ENCODE measurements at regions of chr6 and their contacts with region 1.

Region 1: DNA sequence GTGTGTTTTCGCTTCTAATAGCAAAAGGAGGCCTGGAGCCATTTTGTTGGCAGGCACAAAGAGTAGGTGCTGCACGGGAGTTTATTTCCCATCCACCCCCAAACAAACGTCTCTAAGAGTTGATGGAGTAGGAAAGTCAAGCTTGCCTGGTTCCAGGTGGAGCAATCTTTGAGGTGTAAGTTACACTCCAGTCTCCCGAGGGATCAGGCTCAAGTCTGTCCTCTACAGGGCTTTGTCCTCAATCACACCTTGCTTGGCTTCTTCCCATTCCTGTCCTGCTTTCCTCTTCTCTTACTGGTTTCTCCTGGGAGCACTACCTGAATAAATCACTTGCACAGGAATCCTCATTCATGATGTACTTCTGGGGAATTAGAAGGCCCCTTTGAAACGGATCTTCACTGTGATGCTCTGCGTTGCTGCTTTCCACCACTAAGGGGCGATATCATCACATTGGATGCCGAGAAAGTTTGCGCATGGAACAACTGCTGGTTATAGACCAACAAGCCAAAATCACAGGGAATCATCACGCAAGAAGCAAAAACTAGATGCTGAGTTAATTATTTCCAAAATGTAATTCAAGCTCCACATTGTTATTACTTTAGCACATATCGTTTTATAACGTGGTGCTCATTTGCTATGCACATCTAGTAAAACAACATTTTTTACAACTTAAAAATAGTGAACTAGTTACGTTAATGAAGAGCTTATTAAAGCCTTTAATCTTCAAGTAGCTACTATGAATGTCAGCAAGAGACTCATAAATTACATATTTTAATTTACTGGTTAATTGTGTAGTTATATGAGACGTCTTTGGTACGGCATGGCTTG is 156.8 kb downstream of the DNAH8 start:
- DNase-seq: peak; percentile 34
- H3K4me3 Mint-ChIP-seq: no peak overlapping the region
- H3K27ac Mint-ChIP-seq: no peak overlapping the region
- H3K4me1 Mint-ChIP-seq: peaks cover 19% of the 10 kb centered on the region
- H3K27me3 Mint-ChIP-seq: peaks cover 18% of the 10 kb centered on the region

Region 2: GRCh38 chr6:38933432-38933831 is 61.5 kb after region 1 on chr6:
- intact Hi-C with region 1: loop called (anchors 1 kb)
- DNase-seq: no peak
- H3K4me3 Mint-ChIP-seq: no peak overlapping the region
- H3K27ac Mint-ChIP-seq: no peak overlapping the region
- H3K4me1 Mint-ChIP-seq: no peaks in the 10 kb centered on the region
- H3K27me3 Mint-ChIP-seq: peaks cover 18% of the 10 kb centered on the region

Region 3: DNA sequence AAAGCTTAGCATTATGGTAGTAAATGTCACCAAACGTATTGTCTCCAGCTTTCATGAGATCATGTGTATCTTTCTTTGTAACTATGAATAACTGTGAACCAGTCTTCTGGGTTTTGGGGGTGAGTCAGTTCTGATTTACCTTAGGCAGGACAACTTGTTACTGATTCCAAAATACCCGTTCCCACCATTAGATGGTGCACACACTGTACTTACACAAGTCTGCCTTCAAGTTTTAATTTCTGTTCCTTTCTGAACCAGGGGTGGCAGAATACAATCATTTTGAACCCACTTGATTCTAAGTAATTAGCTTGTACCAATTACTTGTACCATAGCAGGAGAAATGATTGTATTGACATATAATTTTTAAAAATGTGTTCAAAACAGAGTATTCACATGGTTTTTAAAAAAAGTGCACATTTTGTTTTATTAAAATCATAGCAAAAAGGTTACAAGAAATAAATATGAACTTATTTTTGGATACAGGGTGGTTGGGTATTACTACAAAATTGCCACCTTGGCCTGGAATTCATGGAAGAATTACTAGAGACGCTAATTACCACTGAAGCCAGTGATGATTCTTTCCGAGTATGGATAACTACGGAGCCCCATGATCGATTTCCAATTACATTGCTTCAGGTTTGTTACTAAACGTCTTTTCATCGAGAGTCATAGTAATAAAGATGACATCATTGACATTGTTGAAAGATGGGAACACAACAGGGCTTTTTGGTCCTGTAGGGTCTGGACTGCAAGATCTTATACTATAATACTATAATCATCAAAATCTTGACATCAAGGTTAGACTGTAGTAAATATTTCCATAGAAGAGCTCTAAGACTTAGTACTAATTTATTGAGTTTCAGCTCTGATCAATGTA is 101.5 kb after region 1 on chr6:
- intact Hi-C with region 1: loop called (anchors 10 kb)
- DNase-seq: no peak
- H3K4me3 Mint-ChIP-seq: no peak overlapping the region
- H3K27ac Mint-ChIP-seq: no peak overlapping the region
- H3K4me1 Mint-ChIP-seq: peaks cover 5% of the 10 kb centered on the region
- H3K27me3 Mint-ChIP-seq: peaks cover 46% of the 10 kb centered on the region

Region 4: DNA sequence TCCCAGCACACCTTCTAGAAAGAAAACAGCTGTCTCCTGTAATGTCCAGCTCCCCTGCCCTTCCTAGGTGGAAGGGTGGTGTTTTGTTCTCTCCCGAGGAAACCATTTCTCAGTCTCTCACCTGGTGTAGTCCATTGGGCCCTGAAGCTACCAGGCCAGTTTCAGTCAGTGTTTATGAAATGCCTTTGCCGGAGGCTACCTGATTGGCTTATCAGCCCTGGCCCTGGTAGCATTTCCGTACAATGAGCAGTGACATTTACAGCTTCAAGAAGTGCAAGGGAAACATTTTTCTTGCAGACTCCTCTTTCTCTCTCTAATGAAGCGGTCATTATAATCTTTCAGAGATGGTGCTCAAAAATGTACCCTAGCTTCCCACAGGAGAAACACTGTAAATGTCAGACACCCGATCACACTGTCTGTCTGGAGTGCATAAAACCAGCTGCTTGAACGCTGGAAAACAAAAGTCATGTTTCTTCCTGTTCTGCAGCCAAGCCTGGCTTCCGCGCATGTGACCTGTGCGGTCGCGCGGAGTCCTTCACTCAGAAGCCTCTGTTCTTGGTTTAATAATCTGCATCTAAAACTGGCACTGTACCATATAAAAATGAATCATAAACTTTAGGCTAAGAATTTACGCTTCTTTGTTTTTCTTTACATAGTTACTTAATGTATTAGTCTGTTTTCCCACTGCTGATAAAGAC is 271.4 kb after region 1 on chr6:
- intact Hi-C with region 1: no loop called
- DNase-seq: no peak
- H3K4me3 Mint-ChIP-seq: no peak overlapping the region
- H3K27ac Mint-ChIP-seq: no peak overlapping the region
- H3K4me1 Mint-ChIP-seq: peaks cover 9% of the 10 kb centered on the region
- H3K27me3 Mint-ChIP-seq: peaks cover 6% of the 10 kb centered on the region

Region 5: GRCh38 chr6:39166189-39166911 is 294.4 kb after region 1 on chr6:
- intact Hi-C with region 1: loop called (anchors 5 kb)
- DNase-seq: peak; percentile 70
- H3K4me3 Mint-ChIP-seq: no peak overlapping the region
- H3K27ac Mint-ChIP-seq: no peak overlapping the region
- H3K4me1 Mint-ChIP-seq: peaks cover 3% of the 10 kb centered on the region
- H3K27me3 Mint-ChIP-seq: no peaks in the 10 kb centered on the region

Region 6: GRCh38 chr6:39302669-39303424 is 430.9 kb after region 1 on chr6:
- intact Hi-C with region 1: loop called (anchors 2 kb)
- DNase-seq: peak; percentile 77
- H3K4me3 Mint-ChIP-seq: peak overlapping the region; percentile 40
- H3K27ac Mint-ChIP-seq: peak overlapping the region; percentile 20
- H3K4me1 Mint-ChIP-seq: peaks cover 8% of the 10 kb centered on the region
- H3K27me3 Mint-ChIP-seq: peaks cover 4% of the 10 kb centered on the region

Measured in activated T-helper 2 cell treated with anti-CD3 and anti-CD28 coated beads, Interferon-gamma antibody, Interleukin-2, Interleukin-4, amounts not matched to agents 10 μg/mL and 5 μg/mL and 100 μg/mL, durations not matched to agents 14 hours and 24 hours and 36 hours (primary cell).